Naive thymus-derived CD4-positive, alpha-beta T cell (primary cell): ENCODE measurements at regions of chr6 and their contacts with region 1.

Region 1: DNA sequence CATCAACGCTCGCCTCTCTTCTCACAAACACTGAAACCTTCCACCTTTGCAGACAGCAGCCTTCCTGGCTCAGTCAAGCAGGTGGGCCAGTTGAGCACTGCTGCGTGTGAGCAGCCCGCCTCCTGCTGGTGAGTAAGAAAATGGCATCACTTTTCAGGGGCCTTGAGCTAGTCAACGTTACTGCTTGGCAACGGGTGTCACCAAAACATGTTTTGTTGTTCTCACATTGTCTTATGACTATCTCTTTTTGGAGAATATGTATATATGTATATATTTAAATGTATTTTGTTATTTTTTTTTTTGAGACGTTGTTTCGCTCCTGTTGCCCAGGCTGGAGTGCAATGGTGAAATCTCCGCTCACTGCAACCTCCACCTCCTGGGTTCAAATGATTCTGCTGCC is 97.0 kb upstream of the AGPAT4 start:
- DNase-seq: peak; percentile 37 to 66 (median 58)
- ATAC-seq: peak; percentile 81
- H3K4me3 ChIP-seq: no peak overlapping the region
- H3K4me3 Mint-ChIP-seq: no peak overlapping the region
- H3K27ac ChIP-seq: no peak overlapping the region
- H3K27ac Mint-ChIP-seq: peak overlapping the region in 1 of 9 donors; percentile 5
- H3K4me1 ChIP-seq: no peaks in the 10 kb centered on the region
- H3K4me1 Mint-ChIP-seq: peaks cover 0 to 3% (median 0%) of the 10 kb centered on the region in 7 donors
- H3K27me3 ChIP-seq: no peaks in the 10 kb centered on the region
- H3K27me3 Mint-ChIP-seq: no peaks in the 10 kb centered on the region

Region 2: GRCh38 chr6:160137989-160138835 is 1232.7 kb before region 1 on chr6:
- CTCF ChIA-PET with region 1: no interaction called
- POLR2A ChIA-PET with region 1: no interaction called
- intact Hi-C with region 1: loop called in 1 of 2 experiments (anchors 5 kb)
- DNase-seq: peak; percentile 29 to 70 (median 61)
- ATAC-seq: peak; percentile 76
- H3K4me3 ChIP-seq: no peak overlapping the region
- H3K4me3 Mint-ChIP-seq: no peak overlapping the region
- H3K27ac ChIP-seq: no peak overlapping the region
- H3K27ac Mint-ChIP-seq: peak overlapping the region in 3 of 9 donors; percentile 9 to 65 (median 28)
- H3K4me1 ChIP-seq: peaks cover 0 to 4% of the 10 kb centered on the region in 2 donors
- H3K4me1 Mint-ChIP-seq: peaks cover 0 to 10% (median 9%) of the 10 kb centered on the region in 7 donors
- H3K27me3 ChIP-seq: no peaks in the 10 kb centered on the region
- H3K27me3 Mint-ChIP-seq: peaks cover 0 to 6% (median 0%) of the 10 kb centered on the region in 5 donors

Region 3: DNA sequence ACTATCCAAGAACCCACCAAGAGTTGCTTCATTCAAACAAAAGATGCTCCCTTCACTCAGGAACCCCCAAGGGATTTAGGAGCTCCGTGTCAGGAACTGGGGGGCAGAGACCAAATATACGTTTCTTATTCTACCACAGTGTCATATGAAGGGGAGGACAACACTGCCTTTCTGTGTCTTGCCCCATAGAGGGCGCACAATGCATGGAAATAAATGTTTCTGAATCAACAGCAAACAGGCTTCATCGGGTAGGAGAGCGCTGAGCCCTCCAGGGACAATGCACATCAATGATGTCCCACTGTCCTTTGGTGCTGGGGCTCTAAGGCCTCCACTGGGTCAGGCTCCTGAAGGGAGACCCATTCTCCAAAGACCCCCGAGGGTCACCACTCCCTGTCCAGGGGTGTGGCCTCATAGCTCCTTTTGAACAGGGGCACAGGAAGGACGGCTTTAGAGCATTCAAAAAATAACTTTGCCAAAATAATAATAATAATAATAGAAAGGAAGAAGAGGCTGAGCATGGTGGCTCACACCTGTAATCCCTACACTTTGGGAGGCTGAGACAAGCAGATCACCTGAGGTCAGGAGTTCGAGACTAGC is 637.7 kb before region 1 on chr6:
- CTCF ChIA-PET with region 1: interaction called, 4 read pairs
- POLR2A ChIA-PET with region 1: no interaction called
- intact Hi-C with region 1: loop called (anchors 1 to 2 kb)
- DNase-seq: peak in 5 of 9 donors; percentile 0 to 15 (median 4)
- ATAC-seq: peak; percentile 31
- H3K4me3 ChIP-seq: no peak overlapping the region
- H3K4me3 Mint-ChIP-seq: no peak overlapping the region
- H3K27ac ChIP-seq: no peak overlapping the region
- H3K27ac Mint-ChIP-seq: no peak overlapping the region
- H3K4me1 ChIP-seq: no peaks in the 10 kb centered on the region
- H3K4me1 Mint-ChIP-seq: no peaks in the 10 kb centered on the region
- H3K27me3 ChIP-seq: no peaks in the 10 kb centered on the region
- H3K27me3 Mint-ChIP-seq: peaks cover 2 to 21% (median 9%) of the 10 kb centered on the region in 5 donors

Region 4: DNA sequence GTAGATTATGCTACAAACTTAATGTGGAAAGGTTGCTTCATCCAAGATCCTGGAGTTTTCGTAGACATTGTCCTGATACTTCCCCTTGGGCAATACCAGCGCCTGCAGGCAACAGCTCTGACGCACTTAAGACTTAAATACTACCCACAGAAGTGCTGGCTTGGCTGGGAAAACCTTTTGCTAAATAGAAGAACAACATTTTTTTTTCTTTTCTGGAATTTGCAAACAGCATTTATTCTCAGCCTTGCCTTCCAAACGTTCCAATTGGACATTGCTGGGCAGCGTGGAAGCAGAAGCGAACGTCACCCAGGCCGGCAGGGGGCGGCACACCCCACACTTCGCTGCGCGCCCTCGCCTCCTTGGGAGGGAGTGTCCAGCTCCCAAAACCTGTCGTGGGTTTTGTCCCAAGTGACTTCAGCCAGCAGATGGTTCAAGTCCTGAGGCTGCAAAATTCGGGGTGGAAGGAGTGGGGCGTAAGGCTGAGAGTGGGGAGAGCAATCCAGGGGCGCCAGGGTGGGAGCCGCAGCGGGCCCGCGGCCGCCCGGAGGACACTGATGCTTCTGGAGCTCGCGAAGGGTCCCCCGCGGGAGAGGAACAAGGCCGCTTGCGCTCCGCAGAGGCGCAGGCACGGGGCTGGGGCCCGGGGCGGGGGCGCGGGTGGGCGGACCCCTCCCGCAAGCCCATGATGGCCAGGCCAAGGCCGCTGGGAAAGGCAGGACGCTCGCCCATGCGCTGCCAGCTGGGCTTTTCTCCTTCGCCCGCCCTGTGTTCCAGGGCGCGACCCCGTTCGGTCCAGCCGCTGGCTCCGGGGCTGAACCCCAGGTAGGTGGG is 440.1 kb before region 1 on chr6:
- CTCF ChIA-PET with region 1: interaction called, 28 read pairs
- POLR2A ChIA-PET with region 1: no interaction called
- intact Hi-C with region 1: loop called (anchors 1 kb)
- DNase-seq: peak in 8 of 9 donors; percentile 3 to 69 (median 40)
- ATAC-seq: peak; percentile 72
- H3K4me3 ChIP-seq: no peak overlapping the region
- H3K4me3 Mint-ChIP-seq: peak overlapping the region in 7 of 10 donors; percentile 16 to 62 (median 30)
- H3K27ac ChIP-seq: no peak overlapping the region
- H3K27ac Mint-ChIP-seq: no peak overlapping the region
- H3K4me1 ChIP-seq: no peaks in the 10 kb centered on the region
- H3K4me1 Mint-ChIP-seq: peaks cover 0 to 5% (median 0%) of the 10 kb centered on the region in 7 donors
- H3K27me3 ChIP-seq: peaks cover 0 to 5% of the 10 kb centered on the region in 2 donors
- H3K27me3 Mint-ChIP-seq: peaks cover 32 to 50% (median 47%) of the 10 kb centered on the region in 5 donors

Region 5: GRCh38 chr6:161101517-161101916 is 269.4 kb before region 1 on chr6:
- CTCF ChIA-PET with region 1: interaction called, 6 read pairs
- POLR2A ChIA-PET with region 1: no interaction called
- intact Hi-C with region 1: loop called (anchors 1 to 2 kb)
- DNase-seq: no peak
- ATAC-seq: no peak
- H3K4me3 ChIP-seq: no peak overlapping the region
- H3K4me3 Mint-ChIP-seq: no peak overlapping the region
- H3K27ac ChIP-seq: no peak overlapping the region
- H3K27ac Mint-ChIP-seq: no peak overlapping the region
- H3K4me1 ChIP-seq: no peaks in the 10 kb centered on the region
- H3K4me1 Mint-ChIP-seq: peaks cover 0 to 3% (median 0%) of the 10 kb centered on the region in 7 donors
- H3K27me3 ChIP-seq: no peaks in the 10 kb centered on the region
- H3K27me3 Mint-ChIP-seq: no peaks in the 10 kb centered on the region

Region 6: GRCh38 chr6:161228921-161229591 is 141.8 kb before region 1 on chr6:
- CTCF ChIA-PET with region 1: no interaction called
- POLR2A ChIA-PET with region 1: no interaction called
- intact Hi-C with region 1: loop called in 1 of 2 experiments (anchors 5 kb)
- DNase-seq: no peak
- ATAC-seq: peak; percentile 40
- H3K4me3 ChIP-seq: no peak overlapping the region
- H3K4me3 Mint-ChIP-seq: peak overlapping the region in 1 of 10 donors; percentile 76
- H3K27ac ChIP-seq: no peak overlapping the region
- H3K27ac Mint-ChIP-seq: peak overlapping the region in 1 of 9 donors; percentile 90
- H3K4me1 ChIP-seq: peaks cover 0 to 16% of the 10 kb centered on the region in 2 donors
- H3K4me1 Mint-ChIP-seq: peaks cover 9 to 56% (median 25%) of the 10 kb centered on the region in 7 donors
- H3K27me3 ChIP-seq: no peaks in the 10 kb centered on the region
- H3K27me3 Mint-ChIP-seq: no peaks in the 10 kb centered on the region